ENCODE measurements at regions of chr19 and their contacts with region 1.

Region 1: DNA sequence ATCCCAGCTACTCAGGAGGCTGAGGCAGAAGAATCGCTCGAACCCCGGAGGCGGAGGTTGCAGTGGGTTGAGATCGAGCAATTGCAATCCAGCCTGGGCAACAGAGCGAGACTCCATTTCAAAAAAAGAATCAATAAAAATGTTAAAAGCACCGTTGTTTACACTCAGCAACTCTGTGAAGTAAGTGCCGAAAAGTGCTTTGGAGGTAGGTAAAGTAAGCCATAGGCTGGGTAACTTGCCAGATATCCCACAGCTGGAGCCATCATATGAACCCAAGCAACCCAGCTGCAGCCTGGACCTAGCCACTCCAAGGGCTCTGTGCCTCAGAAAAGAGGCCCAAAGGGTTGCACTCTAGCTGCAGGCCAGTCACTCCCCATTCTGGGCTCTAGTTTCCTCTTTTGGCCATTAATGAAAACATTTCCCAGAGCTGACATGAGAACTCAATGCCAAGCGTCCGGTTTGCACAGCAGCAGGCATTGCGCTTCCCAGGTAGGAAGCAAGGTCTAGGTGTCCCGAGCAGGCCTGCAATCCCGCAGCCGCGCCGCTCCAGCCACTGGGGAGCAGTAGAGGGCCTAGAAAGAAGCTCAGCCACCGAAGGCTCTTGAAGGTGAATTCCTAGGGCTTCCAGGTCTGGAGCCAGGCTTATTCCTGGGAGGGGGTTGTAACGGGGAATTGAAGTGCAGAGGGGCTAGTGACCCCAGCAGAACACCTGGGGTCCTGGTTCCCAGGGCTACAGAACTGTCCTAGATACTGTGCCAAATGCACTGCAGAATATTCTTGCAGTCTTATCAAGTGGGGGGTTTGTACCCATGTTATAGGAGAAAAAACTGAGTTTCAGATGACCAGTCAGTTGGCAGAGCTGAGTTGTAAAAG is 4.1 kb upstream of the CD79A start:
- DNase-seq: peak; percentile 78
- ATAC-seq: no peak
- H3K4me3 Mint-ChIP-seq: peak overlapping the region; percentile 60
- H3K27ac Mint-ChIP-seq: peak overlapping the region; percentile 87
- H3K4me1 Mint-ChIP-seq: peaks cover 67% of the 10 kb centered on the region
- H3K27me3 Mint-ChIP-seq: no peaks in the 10 kb centered on the region

Region 2: DNA sequence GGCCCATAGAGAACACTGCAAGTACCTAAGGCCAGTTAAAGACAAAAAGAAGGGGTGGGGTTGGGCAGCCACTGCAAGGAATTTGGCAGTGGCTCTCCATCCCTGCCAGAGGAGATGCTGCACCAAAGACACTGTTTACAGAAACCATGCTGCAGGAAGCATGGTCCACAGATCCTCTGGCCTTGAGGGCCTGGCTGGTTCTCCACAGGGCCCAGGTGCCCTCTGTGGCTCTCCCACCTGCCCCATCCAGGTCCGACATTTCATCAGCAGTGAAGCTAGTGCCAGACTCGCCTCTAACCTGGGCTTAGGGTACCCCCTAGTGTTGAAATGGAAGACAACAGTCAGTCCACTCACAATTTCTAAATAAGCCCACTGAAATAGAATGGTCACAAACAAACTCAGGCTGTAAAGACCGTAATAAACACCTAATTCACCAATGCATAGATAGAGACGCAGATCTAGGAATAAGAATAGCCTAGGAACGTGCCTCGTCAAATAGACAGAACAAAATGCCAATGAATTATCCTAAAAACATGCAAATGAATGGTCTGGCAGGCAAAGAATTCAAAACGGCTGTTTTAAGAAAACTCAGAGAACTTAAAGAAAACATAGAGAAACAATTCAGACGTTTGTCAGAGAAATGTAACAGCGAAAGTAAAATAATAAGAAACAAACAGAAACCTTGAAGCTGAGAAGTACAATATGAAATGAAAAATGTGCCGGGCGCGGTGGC is 51.8 kb before region 1 on chr19:
- POLR2A ChIA-PET with region 1: no interaction called
- DNase-seq: peak; percentile 39
- ATAC-seq: peak; percentile 73
- H3K4me3 Mint-ChIP-seq: no peak overlapping the region
- H3K27ac Mint-ChIP-seq: no peak overlapping the region
- H3K4me1 Mint-ChIP-seq: no peaks in the 10 kb centered on the region
- H3K27me3 Mint-ChIP-seq: peaks cover 39% of the 10 kb centered on the region

Region 3: GRCh38 chr19:41859618-41860418 is 13.2 kb before region 1 on chr19 and contains the start of gene RPS19:
- POLR2A ChIA-PET with region 1: interaction called, 112 read pairs
- DNase-seq: peak; percentile 97
- ATAC-seq: peak; percentile 83
- H3K4me3 Mint-ChIP-seq: peak within 1 kb of the TSS; percentile 85
- H3K27ac Mint-ChIP-seq: peak within 1 kb of the TSS; percentile 89
- H3K4me1 Mint-ChIP-seq: peaks cover 41% of the 10 kb centered on the region
- H3K27me3 Mint-ChIP-seq: no peaks in the 10 kb centered on the region
- total RNA-seq, gene RPS19: 3,237 to 3,326 TPM

Region 4: DNA sequence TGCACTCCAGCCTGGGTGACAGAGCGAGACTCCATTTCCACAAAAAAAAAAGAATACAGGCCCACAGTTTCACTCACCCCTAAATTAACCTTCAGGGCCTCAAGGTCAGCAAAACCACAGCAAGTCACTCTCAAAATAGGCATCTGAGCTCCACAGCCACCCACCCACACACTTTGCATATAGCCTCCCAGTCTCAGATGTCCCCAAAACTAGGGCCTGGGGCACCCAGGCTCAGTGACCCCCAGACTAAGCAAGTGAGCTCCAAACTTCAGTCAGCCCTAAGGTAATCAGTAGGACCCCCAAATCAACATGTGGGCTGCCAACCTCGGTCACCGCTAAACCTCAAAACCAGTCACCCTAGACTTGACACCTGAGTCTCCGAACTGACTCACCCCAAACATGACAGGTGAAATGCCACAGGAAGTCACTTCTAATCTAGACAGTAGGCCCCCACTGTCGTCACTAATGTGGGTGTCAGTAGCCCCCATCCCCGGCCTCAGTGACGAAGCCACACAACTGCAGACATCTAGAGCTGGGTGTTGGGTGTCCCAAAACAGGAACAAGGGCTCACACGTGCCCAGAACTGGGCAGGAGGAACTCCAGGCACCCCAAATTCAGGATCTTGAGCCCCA is 72.2 kb after region 1 on chr19:
- POLR2A ChIA-PET with region 1: interaction called, 40 read pairs
- DNase-seq: peak; percentile 82
- ATAC-seq: peak; percentile 90
- H3K4me3 Mint-ChIP-seq: peak overlapping the region; percentile 69
- H3K27ac Mint-ChIP-seq: peak overlapping the region; percentile 60
- H3K4me1 Mint-ChIP-seq: peaks cover 33% of the 10 kb centered on the region
- H3K27me3 Mint-ChIP-seq: peaks cover 8% of the 10 kb centered on the region

Region 5: GRCh38 chr19:41951686-41952172 is 78.7 kb after region 1 on chr19:
- POLR2A ChIA-PET with region 1: interaction called, 20 read pairs
- DNase-seq: peak; percentile 91
- ATAC-seq: peak; percentile 80
- H3K4me3 Mint-ChIP-seq: no peak overlapping the region
- H3K27ac Mint-ChIP-seq: peak overlapping the region; percentile 61
- H3K4me1 Mint-ChIP-seq: peaks cover 12% of the 10 kb centered on the region
- H3K27me3 Mint-ChIP-seq: no peaks in the 10 kb centered on the region

Region 6: DNA sequence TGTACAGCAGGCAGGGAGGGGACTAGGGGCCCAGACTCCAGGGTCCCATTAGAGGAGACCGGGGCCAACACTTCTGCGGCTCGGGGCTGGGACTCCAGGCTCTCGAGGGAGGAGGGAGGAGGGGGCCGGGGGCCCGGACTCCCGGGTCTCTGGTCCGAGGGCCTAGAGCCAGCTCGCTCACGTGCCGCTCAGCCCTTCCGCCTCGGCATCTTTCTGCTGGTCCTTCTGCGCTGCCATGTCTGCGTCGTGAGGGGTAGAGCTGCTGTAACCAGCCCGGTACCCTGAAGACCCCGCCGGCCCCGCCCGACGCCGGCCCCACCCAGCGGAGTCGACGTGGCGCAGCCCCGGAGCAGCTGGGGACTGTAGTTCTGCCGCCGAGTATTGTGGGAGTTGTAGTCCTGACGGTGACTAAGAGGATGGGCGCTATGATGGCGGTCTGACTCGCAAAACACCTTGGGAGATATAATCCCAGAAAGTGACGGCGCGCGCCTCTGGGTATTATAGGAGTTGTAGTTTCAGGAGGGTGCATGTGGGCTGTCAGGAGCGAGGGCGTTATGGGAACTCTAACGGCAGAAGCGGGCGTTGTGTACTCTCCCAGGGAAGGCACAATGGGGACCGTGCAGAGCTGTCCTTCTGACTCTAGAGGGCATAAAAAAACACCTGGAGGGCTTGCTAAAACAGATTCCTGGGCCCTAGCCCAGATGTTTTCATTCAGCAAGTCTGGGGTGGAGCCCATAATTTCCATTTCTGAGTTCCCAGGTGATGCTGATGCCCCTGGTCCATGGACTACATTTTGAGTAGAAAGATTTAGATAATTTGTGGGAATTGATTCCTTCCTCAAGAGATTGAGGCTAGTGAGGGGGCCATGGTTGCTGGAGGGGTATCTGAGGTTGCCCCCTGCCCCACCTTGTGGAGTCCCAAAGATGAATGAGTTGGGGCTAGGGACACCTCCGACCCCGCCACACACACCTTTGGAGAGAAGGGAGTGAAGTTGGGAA is 86.3 kb after region 1 on chr19 and contains the start of gene RABAC1:
- POLR2A ChIA-PET with region 1: interaction called, 20 read pairs
- DNase-seq: peak; percentile 85
- ATAC-seq: peak; percentile 90
- H3K4me3 Mint-ChIP-seq: peak within 1 kb of the TSS; percentile 99
- H3K27ac Mint-ChIP-seq: peak within 1 kb of the TSS; percentile 96
- H3K4me1 Mint-ChIP-seq: peaks cover 15% of the 10 kb centered on the region
- H3K27me3 Mint-ChIP-seq: no peaks in the 10 kb centered on the region
- total RNA-seq, gene RABAC1: 85.3 to 87.3 TPM

Measured in activated naive CD8-positive, alpha-beta T cell treated with anti-CD3 and anti-CD28 coated beads, Interleukin-2, amount 10 ng/mL, durations not matched to agents 7 days and 5 days (primary cell).